ENCODE measurements at regions of chr15 and their contacts with region 1.

Region 1: GRCh38 chr15:97248376-97248775 is 712.1 kb upstream of the ARRDC4 start:
- DNase-seq: no peak
- H3K4me3 ChIP-seq: no peak overlapping the region
- H3K27ac ChIP-seq: no peak overlapping the region
- H3K4me1 ChIP-seq: no peaks in the 10 kb centered on the region
- H3K27me3 ChIP-seq: no peaks in the 10 kb centered on the region
- CTCF ChIP-seq: no peak
- EP300 ChIP-seq: no peak
- POLR2A ChIP-seq: no peak
- RAD21 ChIP-seq: no peak

Region 2: DNA sequence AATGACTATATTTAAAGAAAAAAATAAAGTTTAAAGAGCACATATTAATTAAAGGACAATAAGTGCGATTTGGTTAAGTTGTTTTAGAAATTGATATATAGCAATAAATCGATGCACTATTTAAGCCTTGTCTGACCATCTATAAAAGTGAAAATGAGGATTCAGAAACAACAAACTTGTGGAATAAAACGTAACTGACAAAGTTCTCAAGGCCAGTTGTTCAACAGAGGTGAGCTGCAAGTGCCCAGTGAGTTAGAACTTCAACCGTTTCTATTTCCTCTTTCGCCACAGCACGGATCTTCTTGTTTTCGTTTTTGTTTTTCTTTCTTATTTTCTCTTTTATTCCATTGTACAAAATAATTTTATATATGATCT is 12.8 kb before region 1 on chr15:
- CTCF ChIA-PET with region 1: interaction called, 10 read pairs
- POLR2A ChIA-PET with region 1: no interaction called
- DNase-seq: no peak
- H3K4me3 ChIP-seq: no peak overlapping the region
- H3K27ac ChIP-seq: no peak overlapping the region
- H3K4me1 ChIP-seq: peaks cover 0 to 2% (median 0%) of the 10 kb centered on the region in 4 experiments; a peak in 1 of 7 replicates
- H3K27me3 ChIP-seq: no peaks in the 10 kb centered on the region
- CTCF ChIP-seq: no peak
- EP300 ChIP-seq: no peak
- POLR2A ChIP-seq: no peak
- RAD21 ChIP-seq: no peak

Region 3: GRCh38 chr15:97482521-97482920 is 234.1 kb after region 1 on chr15:
- CTCF ChIA-PET with region 1: interaction called, 13 read pairs
- POLR2A ChIA-PET with region 1: no interaction called
- DNase-seq: peak in 1 of 2 experiments; percentile 48
- H3K4me3 ChIP-seq: no peak overlapping the region
- H3K27ac ChIP-seq: no peak overlapping the region
- H3K4me1 ChIP-seq: no peaks in the 10 kb centered on the region
- H3K27me3 ChIP-seq: no peaks in the 10 kb centered on the region
- CTCF ChIP-seq: peak; percentile 54 to 75 (median 68)
- EP300 ChIP-seq: no peak
- POLR2A ChIP-seq: no peak
- RAD21 ChIP-seq: peak; percentile 77 to 82

Region 4: DNA sequence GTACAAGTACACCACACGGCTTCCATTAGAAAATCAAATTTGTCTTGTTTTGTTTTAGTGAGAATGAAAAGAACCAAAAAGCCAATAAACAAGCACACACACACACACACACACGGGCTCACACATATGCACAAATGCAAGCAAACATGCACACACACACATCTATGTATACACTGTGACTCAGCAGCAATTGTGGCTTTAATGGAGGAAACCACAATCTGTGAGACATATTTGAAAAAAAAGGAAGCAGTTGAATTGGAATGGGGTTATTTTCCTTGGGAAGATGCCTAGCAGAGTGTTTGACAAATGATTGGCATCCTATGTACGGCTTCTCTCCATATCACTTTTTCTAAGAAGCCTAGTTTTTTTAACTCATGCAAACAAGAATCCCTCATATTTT is 511.0 kb after region 1 on chr15:
- CTCF ChIA-PET with region 1: interaction called, 15 read pairs
- POLR2A ChIA-PET with region 1: no interaction called
- DNase-seq: no peak
- H3K4me3 ChIP-seq: no peak overlapping the region
- H3K27ac ChIP-seq: no peak overlapping the region
- H3K4me1 ChIP-seq: no peaks in the 10 kb centered on the region
- H3K27me3 ChIP-seq: no peaks in the 10 kb centered on the region
- CTCF ChIP-seq: no peak
- EP300 ChIP-seq: no peak
- POLR2A ChIP-seq: no peak
- RAD21 ChIP-seq: no peak

Measured in H1 (cell line).